ENCODE measurements at regions of chr18 and their contacts with region 1.

Region 1: DNA sequence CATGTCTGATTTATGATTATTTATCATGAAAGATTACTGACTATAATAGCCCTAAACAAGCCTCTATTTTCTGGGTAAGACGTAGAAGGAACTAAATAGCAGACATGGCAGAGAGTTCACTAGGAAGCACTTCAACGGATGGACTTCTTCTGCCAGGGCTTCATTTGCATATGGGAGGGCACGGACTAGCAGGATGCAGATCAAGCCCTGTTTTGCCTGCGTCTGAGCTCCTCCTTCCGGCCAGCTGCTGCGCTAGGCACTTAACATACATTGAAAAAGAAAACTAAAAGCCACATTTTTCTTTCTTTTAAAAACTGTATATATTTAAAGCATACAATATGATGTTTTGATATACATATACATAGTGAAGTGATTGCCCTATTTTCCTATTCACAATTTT is 340.0 kb upstream of the MEX3C start:
- DNase-seq: peak; percentile 74
- H3K4me3 Mint-ChIP-seq: no peak overlapping the region
- H3K27ac Mint-ChIP-seq: no peak overlapping the region
- H3K4me1 Mint-ChIP-seq: no peaks in the 10 kb centered on the region
- H3K27me3 Mint-ChIP-seq: no peaks in the 10 kb centered on the region
- CTCF ChIP-seq: peak; percentile 54

Region 2: DNA sequence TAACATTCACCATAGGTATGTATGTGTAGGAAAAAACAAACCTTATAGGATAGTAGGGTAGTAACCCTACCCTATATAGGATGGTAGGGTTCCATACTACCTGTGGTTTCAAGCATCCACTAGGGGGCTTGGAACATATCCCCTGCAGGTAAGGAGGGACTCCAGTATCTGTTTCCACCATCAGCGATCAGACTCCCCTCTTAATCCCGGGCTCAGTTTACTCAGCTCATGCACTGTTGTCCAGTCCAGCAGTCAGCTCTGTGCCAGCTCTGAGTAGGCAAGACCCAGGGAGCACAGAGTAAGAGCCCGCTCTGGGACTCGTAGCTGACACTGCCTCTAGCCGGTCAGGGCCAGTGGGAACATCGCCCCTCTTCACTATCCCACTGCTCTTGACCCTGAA is 401.7 kb before region 1 on chr18:
- CTCF ChIA-PET with region 1: interaction called, 3 read pairs
- POLR2A ChIA-PET with region 1: no interaction called
- intact Hi-C with region 1: loop called (anchors 10 kb)
- DNase-seq: peak; percentile 48
- H3K4me3 Mint-ChIP-seq: peak overlapping the region; percentile 85
- H3K27ac Mint-ChIP-seq: peak overlapping the region; percentile 97
- H3K4me1 Mint-ChIP-seq: peaks cover 45% of the 10 kb centered on the region
- H3K27me3 Mint-ChIP-seq: no peaks in the 10 kb centered on the region
- CTCF ChIP-seq: no peak

Region 3: DNA sequence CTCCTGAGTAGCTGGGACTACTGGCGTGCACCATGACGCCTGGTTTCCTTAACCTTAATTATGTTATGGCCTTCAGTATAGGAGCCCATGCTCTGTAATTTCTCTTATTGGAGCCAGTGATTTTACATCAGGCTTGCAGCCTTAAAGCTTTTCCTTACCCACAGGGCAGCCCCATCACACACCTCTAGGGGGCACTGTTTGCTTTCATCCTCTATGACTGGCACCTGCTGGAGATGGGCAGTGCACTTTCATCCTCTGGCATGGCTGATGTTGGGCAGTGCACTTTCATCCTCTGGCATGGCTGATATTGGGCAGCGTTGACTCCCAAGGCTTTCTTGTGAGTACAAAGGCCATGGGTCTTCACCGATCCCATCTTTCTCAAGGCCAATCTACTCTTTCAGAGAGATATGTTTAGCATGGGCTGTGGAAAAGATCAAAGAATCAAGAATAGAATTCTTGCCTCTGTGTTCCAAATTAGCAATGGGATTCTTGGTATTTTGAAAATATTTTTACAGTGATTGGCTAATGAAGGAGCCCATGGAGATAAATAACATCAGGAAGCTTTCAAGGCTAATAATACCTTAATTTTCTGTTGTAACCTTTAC is 259.3 kb before region 1 on chr18:
- CTCF ChIA-PET with region 1: interaction called, 8 read pairs
- POLR2A ChIA-PET with region 1: interaction called, 3 read pairs
- intact Hi-C with region 1: loop called (anchors 1 kb)
- DNase-seq: peak; percentile 87
- H3K4me3 Mint-ChIP-seq: no peak overlapping the region
- H3K27ac Mint-ChIP-seq: no peak overlapping the region
- H3K4me1 Mint-ChIP-seq: no peaks in the 10 kb centered on the region
- H3K27me3 Mint-ChIP-seq: no peaks in the 10 kb centered on the region
- CTCF ChIP-seq: peak; percentile 87

Region 4: GRCh38 chr18:51290860-51291259 is 246.6 kb before region 1 on chr18:
- CTCF ChIA-PET with region 1: no interaction called
- POLR2A ChIA-PET with region 1: no interaction called
- intact Hi-C with region 1: loop called (anchors 5 kb)
- DNase-seq: no peak
- H3K4me3 Mint-ChIP-seq: no peak overlapping the region
- H3K27ac Mint-ChIP-seq: no peak overlapping the region
- H3K4me1 Mint-ChIP-seq: no peaks in the 10 kb centered on the region
- H3K27me3 Mint-ChIP-seq: no peaks in the 10 kb centered on the region
- CTCF ChIP-seq: no peak

Region 5: DNA sequence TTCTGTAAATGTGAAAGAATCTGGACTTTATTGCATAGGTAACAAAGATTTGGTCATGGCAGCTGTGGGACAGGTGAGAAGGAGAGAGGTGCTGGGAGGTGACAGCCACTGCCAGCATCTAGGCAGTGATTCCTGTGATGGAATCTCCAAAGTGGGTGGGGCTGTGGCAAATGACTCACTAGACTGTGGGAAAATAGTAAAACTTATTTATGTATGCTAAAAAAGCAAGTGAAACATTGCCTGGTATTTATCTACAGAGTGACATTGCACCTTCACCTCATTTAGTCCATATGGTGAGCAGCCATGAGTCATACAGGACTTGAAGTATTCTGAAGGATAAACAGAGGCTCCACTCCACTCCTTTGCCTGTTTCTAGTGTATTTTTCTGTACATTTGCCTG is 194.7 kb before region 1 on chr18:
- CTCF ChIA-PET with region 1: no interaction called
- POLR2A ChIA-PET with region 1: no interaction called
- intact Hi-C with region 1: loop called (anchors 5 kb)
- DNase-seq: peak; percentile 90
- H3K4me3 Mint-ChIP-seq: no peak overlapping the region
- H3K27ac Mint-ChIP-seq: no peak overlapping the region
- H3K4me1 Mint-ChIP-seq: peaks cover 15% of the 10 kb centered on the region
- H3K27me3 Mint-ChIP-seq: no peaks in the 10 kb centered on the region
- CTCF ChIP-seq: no peak

Region 6: DNA sequence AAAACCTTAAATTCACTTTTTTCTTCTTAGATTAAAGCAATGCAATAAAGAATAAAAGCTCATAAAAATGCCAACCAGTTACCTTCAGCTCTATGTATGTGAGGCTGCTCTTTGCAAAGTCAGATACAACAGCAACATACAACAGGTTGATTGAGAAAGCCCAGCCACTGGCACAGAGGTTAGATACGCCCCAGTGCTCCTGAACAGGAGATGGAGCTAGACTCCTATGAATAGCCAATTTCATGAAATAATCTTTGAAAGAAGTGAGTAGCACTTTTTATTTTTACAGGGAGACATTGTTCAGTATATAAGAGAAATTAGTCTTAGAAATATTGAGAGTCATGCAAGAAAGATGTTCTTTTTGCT is 22.4 kb after region 1 on chr18:
- CTCF ChIA-PET with region 1: no interaction called
- POLR2A ChIA-PET with region 1: no interaction called
- intact Hi-C with region 1: no loop called
- DNase-seq: peak; percentile 41
- H3K4me3 Mint-ChIP-seq: no peak overlapping the region
- H3K27ac Mint-ChIP-seq: no peak overlapping the region
- H3K4me1 Mint-ChIP-seq: no peaks in the 10 kb centered on the region
- H3K27me3 Mint-ChIP-seq: no peaks in the 10 kb centered on the region
- CTCF ChIP-seq: peak; percentile 25

Measured in MCF 10A (cell line).